WTC11 (cell line): ENCODE measurements at regions of chr20 and their contacts with region 1.

Region 1: DNA sequence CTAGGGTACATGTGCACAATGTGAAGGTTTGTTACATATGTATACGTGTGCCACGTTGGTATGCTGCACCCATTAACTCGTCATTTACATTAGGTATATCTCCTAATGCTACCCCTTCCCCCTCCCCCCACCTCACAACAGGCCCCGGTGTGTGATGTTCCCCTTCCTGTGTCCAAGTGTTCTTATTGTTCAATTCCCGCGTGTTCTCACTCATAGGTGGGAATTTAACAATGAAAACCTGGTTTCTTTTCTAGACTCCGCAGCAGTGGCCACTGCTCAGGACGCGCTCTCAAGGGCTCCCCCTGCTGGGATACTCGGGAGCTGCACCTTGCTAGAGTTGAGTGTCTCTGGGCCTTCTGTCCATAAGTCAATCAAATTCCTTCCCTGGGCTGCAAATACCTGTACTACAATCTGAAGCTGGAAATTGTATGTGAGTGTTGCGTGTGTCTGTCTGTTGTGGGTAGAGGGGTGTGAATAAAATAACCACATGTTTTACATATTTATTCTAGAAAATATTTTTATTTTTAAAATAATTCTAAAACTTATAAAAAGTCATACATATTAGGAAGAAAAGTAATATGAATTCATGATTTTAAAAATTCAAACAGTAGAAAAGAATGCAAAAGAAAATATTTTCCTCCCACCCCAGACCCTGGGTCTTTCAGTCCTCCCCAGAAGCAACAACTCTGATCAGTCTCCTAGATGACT is 8.2 kb upstream of the CEP250 start:
- DNase-seq: peak; percentile 96
- ATAC-seq: peak; percentile 88
- H3K4me3 Mint-ChIP-seq: peak overlapping the region; percentile 80
- H3K27ac Mint-ChIP-seq: no peak overlapping the region
- H3K4me1 Mint-ChIP-seq: peaks cover 12% of the 10 kb centered on the region
- H3K27me3 Mint-ChIP-seq: no peaks in the 10 kb centered on the region
- CTCF ChIP-seq: peak; percentile 95

Region 2: DNA sequence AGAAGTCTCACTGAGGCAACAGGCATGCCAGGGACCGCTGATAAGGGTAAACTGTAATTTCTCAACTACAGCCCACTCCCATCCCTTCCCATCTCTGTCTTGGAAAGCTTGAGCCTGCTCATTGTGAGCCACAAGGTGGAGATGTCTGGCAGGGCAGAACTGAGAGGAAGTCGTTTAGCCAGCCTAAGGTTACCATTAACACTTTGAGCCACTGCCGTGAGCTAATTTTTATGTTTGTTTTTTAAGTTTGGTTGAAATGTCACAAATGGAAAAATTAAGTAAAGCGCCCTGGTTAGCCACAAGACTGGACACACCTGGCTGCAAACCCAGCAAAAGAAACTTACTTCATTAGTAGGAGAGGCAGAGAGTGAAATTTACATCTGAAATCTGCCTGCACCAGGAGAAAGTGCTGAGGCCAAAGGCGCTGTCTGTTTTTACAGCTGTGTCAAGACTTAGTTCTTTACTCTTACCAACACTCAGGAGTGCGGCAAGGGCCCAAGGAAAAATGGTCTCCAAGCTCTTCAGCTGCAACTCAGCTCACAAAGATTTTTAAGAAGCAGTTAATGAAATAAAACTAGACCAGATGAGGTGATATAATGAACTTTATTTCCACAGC is 105.0 kb before region 1 on chr20:
- CTCF ChIA-PET with region 1: interaction called, 14 read pairs
- POLR2A ChIA-PET with region 1: no interaction called
- DNase-seq: peak; percentile 18
- ATAC-seq: peak; percentile 94
- H3K4me3 Mint-ChIP-seq: no peak overlapping the region
- H3K27ac Mint-ChIP-seq: peak overlapping the region; percentile 57
- H3K4me1 Mint-ChIP-seq: peaks cover 5% of the 10 kb centered on the region; the same call in 1 of the 2 replicates
- H3K27me3 Mint-ChIP-seq: no peaks in the 10 kb centered on the region
- CTCF ChIP-seq: no peak

Region 3: GRCh38 chr20:35432430-35432735 is 14.9 kb before region 1 on chr20:
- CTCF ChIA-PET with region 1: interaction called, 36 read pairs
- POLR2A ChIA-PET with region 1: interaction called, 3 read pairs
- DNase-seq: no peak
- ATAC-seq: peak; percentile 60
- H3K4me3 Mint-ChIP-seq: no peak overlapping the region
- H3K27ac Mint-ChIP-seq: no peak overlapping the region; the same call in 1 of the 2 replicates
- H3K4me1 Mint-ChIP-seq: peaks cover 30% of the 10 kb centered on the region
- H3K27me3 Mint-ChIP-seq: no peaks in the 10 kb centered on the region; the same call in 1 of the 2 replicates
- CTCF ChIP-seq: no peak